Heart left ventricle (tissue), 16 donors: ENCODE measurements at regions of chr4 and their contacts with region 1.

Region 1: GRCh38 chr4:101347557-101348366 is 436 bp upstream of the PPP3CA start:
- DNase-seq: peak; percentile 99 to 100 (median 100)
- ATAC-seq: peak; percentile 95 to 99 (median 97)
- H3K4me3 ChIP-seq: peak overlapping the region; percentile 56 to 97 (median 87)
- H3K27ac ChIP-seq: peak overlapping the region; percentile 88 to 99 (median 94)
- H3K4me1 ChIP-seq: peaks cover 0 to 36% (median 17%) of the 10 kb centered on the region in 12 donors
- H3K27me3 ChIP-seq: no peaks in the 10 kb centered on the region
- CTCF ChIP-seq: peak in 2 of 12 donors; percentile 7 to 20
- POLR2A ChIP-seq: peak in 1 of 2 donors; percentile 59

Region 2: DNA sequence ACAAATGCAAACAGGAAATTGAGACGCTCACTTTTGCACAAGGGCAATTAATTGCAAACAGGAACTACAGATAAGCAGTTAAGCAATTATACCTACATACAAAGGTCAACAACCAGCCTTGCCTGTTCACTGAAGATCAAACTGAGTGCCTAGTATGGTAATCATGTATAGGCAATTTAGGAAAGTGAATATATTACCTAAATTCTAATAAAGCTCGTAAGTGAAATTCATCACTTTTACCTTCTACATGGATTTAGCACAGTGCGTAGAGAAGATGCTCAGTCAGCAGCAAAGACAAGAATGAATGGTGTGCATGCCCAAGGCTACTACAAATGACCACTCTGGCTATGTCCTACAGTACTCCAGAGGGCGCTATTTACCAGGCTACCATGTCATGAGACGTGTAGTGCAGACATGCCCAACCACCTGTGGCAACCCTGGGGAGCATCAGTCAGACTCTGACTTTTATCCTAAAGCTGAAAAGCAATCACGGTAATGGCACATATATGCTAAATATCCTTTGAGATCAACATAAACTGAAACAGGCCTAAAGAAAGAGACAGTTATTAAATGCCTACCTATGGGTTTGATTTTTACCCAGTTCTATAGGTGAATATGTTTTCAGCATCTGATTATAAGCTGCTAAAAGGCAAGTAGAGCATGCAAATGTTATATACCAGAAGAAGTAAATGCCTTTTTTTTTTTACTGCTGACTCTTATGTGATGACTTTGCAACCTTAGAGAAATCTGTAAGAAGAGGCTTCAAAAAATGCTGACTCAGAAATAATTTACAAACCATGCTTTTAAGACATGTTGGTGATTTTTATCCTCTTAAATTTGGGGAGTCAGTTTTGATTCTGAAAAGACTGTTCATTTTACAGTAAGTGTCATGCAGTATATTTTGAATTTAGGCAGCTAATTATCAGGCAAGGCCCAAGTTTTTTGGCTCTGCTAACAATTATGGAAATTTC is 178.4 kb before region 1 on chr4:
- intact Hi-C with region 1: loop called in 6 of 10 experiments (anchors 5 to 10 kb)
- DNase-seq: peak in 4 of 5 donors; percentile 40 to 62 (median 54)
- ATAC-seq: peak; percentile 93 to 97 (median 97)
- H3K4me3 ChIP-seq: no peak overlapping the region
- H3K27ac ChIP-seq: no peak overlapping the region
- H3K4me1 ChIP-seq: peaks cover 0 to 14% (median 0%) of the 10 kb centered on the region in 12 donors
- H3K27me3 ChIP-seq: no peaks in the 10 kb centered on the region
- CTCF ChIP-seq: peak; percentile 64 to 86 (median 78)
- POLR2A ChIP-seq: no peak

Region 3: DNA sequence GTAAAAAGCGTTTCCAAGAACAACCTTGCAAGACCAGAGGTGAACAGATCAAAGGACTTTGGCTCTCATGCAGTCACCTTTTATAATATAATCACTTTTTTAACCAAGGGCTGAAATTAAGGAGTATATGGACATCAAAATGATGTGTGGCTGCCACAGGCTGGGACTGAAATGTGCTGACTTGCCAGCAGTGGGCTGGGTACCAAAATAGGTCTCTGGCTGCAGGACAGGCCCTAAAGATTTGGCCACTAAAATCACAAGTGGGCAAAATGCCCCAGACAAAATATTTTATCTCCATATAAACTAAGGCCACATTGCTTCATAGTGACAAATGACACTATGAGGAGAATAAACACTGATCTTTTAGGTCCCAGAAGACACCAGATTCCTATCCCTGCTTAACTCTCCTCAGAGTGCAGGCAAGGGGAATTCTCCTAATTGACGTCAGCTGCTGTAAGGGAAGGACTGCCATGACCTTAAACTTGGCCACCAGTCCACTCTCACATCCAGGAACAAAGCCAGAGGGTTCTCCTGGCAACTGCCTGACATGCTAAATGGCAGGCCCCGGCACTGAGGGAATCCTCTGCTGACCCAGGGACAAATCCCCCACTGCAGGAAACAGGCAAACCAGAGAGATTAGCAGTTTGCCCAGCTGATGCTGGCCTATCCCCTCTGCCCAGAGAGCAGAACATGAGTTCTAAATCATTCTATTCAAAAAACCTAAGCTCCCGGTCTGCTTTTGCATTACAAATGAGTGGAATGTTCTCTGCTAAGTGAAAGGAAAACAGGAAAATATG is 156.3 kb before region 1 on chr4:
- intact Hi-C with region 1: loop called in 8 of 10 experiments (anchors 1 to 5 kb)
- DNase-seq: peak; percentile 69 to 91 (median 85)
- ATAC-seq: peak; percentile 99
- H3K4me3 ChIP-seq: peak overlapping the region in 2 of 12 donors; percentile 3 to 4
- H3K27ac ChIP-seq: peak overlapping the region; percentile 16 to 79 (median 67)
- H3K4me1 ChIP-seq: peaks cover 5 to 34% (median 21%) of the 10 kb centered on the region in 12 donors
- H3K27me3 ChIP-seq: no peaks in the 10 kb centered on the region
- CTCF ChIP-seq: no peak
- POLR2A ChIP-seq: no peak

Region 4: GRCh38 chr4:101288365-101289145 is 59.2 kb before region 1 on chr4:
- intact Hi-C with region 1: loop called in 4 of 10 experiments (anchors 5 to 10 kb)
- DNase-seq: peak in 1 of 5 donors; percentile 11
- ATAC-seq: peak in 2 of 4 donors; percentile 45 to 73
- H3K4me3 ChIP-seq: peak overlapping the region in 1 of 12 donors; percentile 22
- H3K27ac ChIP-seq: peak overlapping the region in 2 of 12 donors; percentile 7 to 27
- H3K4me1 ChIP-seq: peaks cover 2 to 71% (median 44%) of the 10 kb centered on the region in 12 donors
- H3K27me3 ChIP-seq: no peaks in the 10 kb centered on the region
- CTCF ChIP-seq: no peak
- POLR2A ChIP-seq: no peak

Region 5: DNA sequence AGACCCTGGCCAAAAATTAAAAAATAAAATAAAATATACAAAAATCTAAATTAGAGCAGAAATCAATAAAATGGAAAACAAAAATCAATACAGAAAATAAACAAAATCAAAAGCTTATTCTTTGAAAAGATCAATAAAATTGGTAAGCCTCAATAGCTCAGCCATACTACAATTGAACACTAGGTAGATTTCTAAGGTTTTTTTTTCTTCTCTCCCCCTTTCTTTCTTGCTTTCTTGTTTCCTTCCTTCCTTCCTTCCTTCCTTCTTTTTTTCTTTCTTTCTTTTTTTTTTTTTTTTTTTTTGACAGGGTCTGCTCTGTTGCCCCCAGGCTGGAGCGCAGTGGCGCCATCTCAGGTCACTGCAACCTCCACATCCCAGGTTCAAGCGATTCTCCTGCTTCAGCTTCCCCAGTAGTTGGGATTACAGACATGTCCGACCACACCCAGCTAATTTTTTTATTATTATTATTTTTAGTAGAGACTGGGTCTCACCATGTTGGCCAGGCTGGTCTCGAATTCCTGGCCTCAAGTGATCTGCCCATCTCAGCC is 23.0 kb after region 1 on chr4:
- intact Hi-C with region 1: no loop called
- DNase-seq: no peak
- ATAC-seq: no peak
- H3K4me3 ChIP-seq: no peak overlapping the region
- H3K27ac ChIP-seq: no peak overlapping the region
- H3K4me1 ChIP-seq: no peaks in the 10 kb centered on the region
- H3K27me3 ChIP-seq: no peaks in the 10 kb centered on the region
- CTCF ChIP-seq: no peak
- POLR2A ChIP-seq: no peak

Region 6: GRCh38 chr4:101425829-101426228 is 78.1 kb after region 1 on chr4:
- intact Hi-C with region 1: no loop called
- DNase-seq: no peak
- ATAC-seq: no peak
- H3K4me3 ChIP-seq: no peak overlapping the region
- H3K27ac ChIP-seq: no peak overlapping the region
- H3K4me1 ChIP-seq: no peaks in the 10 kb centered on the region
- H3K27me3 ChIP-seq: no peaks in the 10 kb centered on the region
- CTCF ChIP-seq: no peak
- POLR2A ChIP-seq: no peak

Region 7: GRCh38 chr4:101730291-101731117 is 382.7 kb after region 1 on chr4:
- intact Hi-C with region 1: loop called in 4 of 10 experiments (anchors 5 to 10 kb)
- DNase-seq: peak; percentile 44 to 62 (median 54)
- ATAC-seq: peak in 3 of 4 donors; percentile 89 to 93 (median 92)
- H3K4me3 ChIP-seq: no peak overlapping the region
- H3K27ac ChIP-seq: no peak overlapping the region
- H3K4me1 ChIP-seq: no peaks in the 10 kb centered on the region
- H3K27me3 ChIP-seq: no peaks in the 10 kb centered on the region
- CTCF ChIP-seq: peak; percentile 54 to 81 (median 72)
- POLR2A ChIP-seq: no peak